ENCODE measurements at regions of chr4 and their contacts with region 1.

Region 1: GRCh38 chr4:108204518-108204917 is 35.8 kb upstream of the LEF1 start:
- DNase-seq: no peak
- ATAC-seq: no peak
- H3K4me3 ChIP-seq: no peak overlapping the region
- H3K27ac ChIP-seq: no peak overlapping the region
- H3K4me1 ChIP-seq: no peaks in the 10 kb centered on the region
- H3K27me3 ChIP-seq: peaks cover 0 to 4% of the 10 kb centered on the region in 2 experiments; a peak in 1 of 5 replicates
- CTCF ChIP-seq: no peak
- EP300 ChIP-seq: no peak
- POLR2A ChIP-seq: no peak
- RAD21 ChIP-seq: no peak

Region 2: GRCh38 chr4:108287834-108288413 is 83.4 kb after region 1 on chr4:
- CTCF ChIA-PET with region 1: no interaction called
- POLR2A ChIA-PET with region 1: no interaction called
- in situ Hi-C with region 1: no loop called
- intact Hi-C with region 1: no loop called
- DNase-seq: no peak
- ATAC-seq: no peak
- H3K4me3 ChIP-seq: no peak overlapping the region
- H3K27ac ChIP-seq: no peak overlapping the region
- H3K4me1 ChIP-seq: no peaks in the 10 kb centered on the region
- H3K27me3 ChIP-seq: no peaks in the 10 kb centered on the region; a peak in 1 of 5 replicates
- CTCF ChIP-seq: no peak
- EP300 ChIP-seq: no peak
- POLR2A ChIP-seq: no peak
- RAD21 ChIP-seq: no peak

Region 3: DNA sequence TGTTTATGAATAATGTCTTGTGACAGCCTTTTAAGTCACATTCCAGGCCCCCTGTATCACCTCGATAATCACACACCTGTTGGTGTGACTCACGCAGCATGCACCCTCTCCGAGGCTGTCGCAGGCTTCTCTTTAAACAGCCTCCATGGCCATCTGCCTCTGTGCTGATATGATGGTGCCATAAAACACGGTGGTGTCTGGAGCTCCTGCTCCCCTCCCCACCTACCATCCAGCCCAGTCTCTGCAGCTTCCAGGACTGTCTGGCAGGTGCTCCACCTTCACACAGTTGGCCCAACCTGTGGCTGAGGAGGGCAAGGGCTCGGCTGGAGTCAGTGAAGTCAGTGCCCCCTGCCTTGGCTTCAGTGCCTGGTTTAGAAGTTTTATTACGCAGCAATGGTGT is 242.0 kb after region 1 on chr4:
- CTCF ChIA-PET with region 1: no interaction called
- POLR2A ChIA-PET with region 1: no interaction called
- in situ Hi-C with region 1: no loop called
- intact Hi-C with region 1: loop called (anchors 5 kb)
- DNase-seq: peak in 1 of 4 experiments; percentile 27
- ATAC-seq: peak; percentile 28; the same call in 2 of the 3 replicates
- H3K4me3 ChIP-seq: no peak overlapping the region
- H3K27ac ChIP-seq: no peak overlapping the region
- H3K4me1 ChIP-seq: no peaks in the 10 kb centered on the region
- H3K27me3 ChIP-seq: peaks cover 0 to 6% of the 10 kb centered on the region in 2 experiments; a peak in 2 of 5 replicates
- CTCF ChIP-seq: no peak
- EP300 ChIP-seq: no peak
- POLR2A ChIP-seq: no peak
- RAD21 ChIP-seq: no peak